Activated CD4-positive, alpha-beta T cell treated with anti-CD3 and anti-CD28 coated beads, Interleukin-2, amount 10 ng/mL, durations not matched to agents 7 days and 5 days (primary cell): ENCODE measurements at regions of chr19 and their contacts with region 1.

Region 1: GRCh38 chr19:47243776-47244547 is 12.4 kb upstream of the CCDC9 start:
- DNase-seq: peak; percentile 89
- H3K4me3 Mint-ChIP-seq: peak overlapping the region; percentile 71
- H3K27ac Mint-ChIP-seq: peak overlapping the region; percentile 92
- H3K4me1 Mint-ChIP-seq: peaks cover 27% of the 10 kb centered on the region
- H3K27me3 Mint-ChIP-seq: peaks cover 3% of the 10 kb centered on the region

Region 2: DNA sequence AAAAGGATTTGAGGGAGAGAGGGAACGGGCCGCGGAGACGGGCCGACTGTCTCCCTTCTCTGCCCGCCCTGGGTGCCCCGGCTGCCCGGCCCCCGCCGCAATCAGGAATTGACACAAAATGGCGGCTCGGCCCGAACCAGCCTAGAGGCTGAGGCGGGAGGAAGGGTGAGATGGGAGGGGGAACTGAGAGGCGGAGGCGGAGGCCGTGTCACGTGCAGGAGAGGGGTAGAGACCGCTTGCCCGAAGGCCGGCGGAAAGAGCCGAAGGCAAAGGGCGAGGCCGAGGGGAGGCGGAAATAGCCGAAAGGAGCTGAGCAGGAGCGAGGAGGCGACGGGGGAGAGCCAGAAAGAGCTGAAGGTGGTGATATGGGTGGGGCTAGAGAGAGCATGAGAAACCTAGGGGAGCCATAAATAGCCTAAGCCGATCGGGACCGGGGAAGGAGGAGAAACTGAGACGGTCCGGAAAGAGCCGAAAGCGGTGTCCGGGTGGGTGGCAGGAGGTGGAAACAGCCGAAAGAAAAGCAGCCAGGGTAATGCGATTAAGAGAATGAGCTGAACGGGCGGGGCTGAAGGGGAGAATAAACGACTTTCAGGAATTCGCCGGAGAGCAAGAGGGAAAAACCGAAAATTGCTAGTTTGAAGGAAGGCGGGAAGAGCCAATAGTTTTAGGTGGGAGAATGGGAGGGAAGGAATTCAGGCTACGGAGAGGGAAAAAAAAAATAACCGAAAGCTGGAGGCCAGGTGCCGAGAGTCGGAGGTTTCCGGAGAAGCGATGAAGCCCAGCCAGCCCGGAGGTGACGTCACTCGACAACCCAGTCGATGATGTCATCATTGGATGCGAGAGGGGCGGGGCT is 130.7 kb before region 1 on chr19 and contains the start of gene ZC3H4:
- CTCF ChIA-PET with region 1: interaction called, 17 read pairs
- POLR2A ChIA-PET with region 1: interaction called, 4 read pairs
- DNase-seq: peak; percentile 100
- H3K4me3 Mint-ChIP-seq: peak within 1 kb of the TSS; percentile 93
- H3K27ac Mint-ChIP-seq: peak within 1 kb of the TSS; percentile 100
- H3K4me1 Mint-ChIP-seq: peaks cover 29% of the 10 kb centered on the region
- H3K27me3 Mint-ChIP-seq: no peaks in the 10 kb centered on the region
- total RNA-seq, gene ZC3H4: 99.5 to 115 TPM

Region 3: GRCh38 chr19:47143322-47144073 is 100.5 kb before region 1 on chr19:
- CTCF ChIA-PET with region 1: interaction called, 31 read pairs
- POLR2A ChIA-PET with region 1: interaction called, 4 read pairs
- DNase-seq: no peak
- H3K4me3 Mint-ChIP-seq: no peak overlapping the region
- H3K27ac Mint-ChIP-seq: peak overlapping the region; percentile 32
- H3K4me1 Mint-ChIP-seq: peaks cover 53% of the 10 kb centered on the region
- H3K27me3 Mint-ChIP-seq: no peaks in the 10 kb centered on the region

Region 4: DNA sequence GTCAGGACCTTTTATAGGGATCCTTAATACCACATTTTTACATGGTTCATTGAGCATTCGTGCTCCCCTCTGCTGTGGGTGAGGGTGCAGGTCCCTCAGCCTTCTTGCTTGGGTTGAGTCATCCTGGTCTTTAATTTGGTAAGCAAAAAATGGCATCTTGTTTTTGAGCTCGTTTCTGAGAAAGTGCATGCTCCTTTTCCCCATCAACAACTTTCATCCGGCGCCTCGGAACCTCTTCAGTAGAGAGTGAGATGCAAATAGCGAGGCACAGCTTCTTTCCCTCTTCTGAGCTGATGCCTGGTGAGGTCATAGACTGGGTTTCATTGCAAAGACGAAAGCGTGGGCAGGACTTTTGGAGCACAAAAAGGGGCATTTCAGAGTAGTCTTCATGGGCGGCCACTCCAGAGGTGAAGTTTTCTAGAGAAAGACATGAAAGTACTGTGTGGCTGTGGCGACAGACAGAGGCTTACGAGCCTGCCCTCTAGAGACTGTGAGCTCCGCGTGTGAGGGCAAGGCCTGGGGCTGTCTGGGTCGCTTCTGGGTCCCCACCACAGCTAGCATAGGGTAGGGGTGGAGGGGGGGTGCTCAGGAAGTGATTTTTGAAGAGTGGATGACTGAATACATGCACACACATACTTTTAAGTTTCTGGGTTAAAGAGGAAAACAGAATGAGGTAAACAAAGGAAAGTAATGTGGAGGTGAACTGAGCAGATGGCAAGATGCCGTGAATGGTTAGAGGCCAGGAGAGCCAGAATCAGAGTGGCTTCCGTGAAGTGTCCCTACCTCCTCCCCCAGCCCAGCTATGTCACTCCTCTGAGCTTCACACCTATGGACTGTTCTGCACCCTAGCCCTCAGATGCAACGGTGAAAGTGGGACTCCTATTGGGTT is 57.3 kb before region 1 on chr19:
- CTCF ChIA-PET with region 1: interaction called, 20 read pairs
- POLR2A ChIA-PET with region 1: interaction called, 3 read pairs
- DNase-seq: peak; percentile 78
- H3K4me3 Mint-ChIP-seq: peak overlapping the region; percentile 44
- H3K27ac Mint-ChIP-seq: peak overlapping the region; percentile 93
- H3K4me1 Mint-ChIP-seq: peaks cover 87% of the 10 kb centered on the region
- H3K27me3 Mint-ChIP-seq: no peaks in the 10 kb centered on the region

Region 5: GRCh38 chr19:47225746-47226425 is 18.1 kb before region 1 on chr19:
- CTCF ChIA-PET with region 1: interaction called, 78 read pairs
- POLR2A ChIA-PET with region 1: interaction called, 5 read pairs
- DNase-seq: peak; percentile 84
- H3K4me3 Mint-ChIP-seq: peak overlapping the region; percentile 76
- H3K27ac Mint-ChIP-seq: peak overlapping the region; percentile 82
- H3K4me1 Mint-ChIP-seq: peaks cover 17% of the 10 kb centered on the region
- H3K27me3 Mint-ChIP-seq: no peaks in the 10 kb centered on the region

Region 6: DNA sequence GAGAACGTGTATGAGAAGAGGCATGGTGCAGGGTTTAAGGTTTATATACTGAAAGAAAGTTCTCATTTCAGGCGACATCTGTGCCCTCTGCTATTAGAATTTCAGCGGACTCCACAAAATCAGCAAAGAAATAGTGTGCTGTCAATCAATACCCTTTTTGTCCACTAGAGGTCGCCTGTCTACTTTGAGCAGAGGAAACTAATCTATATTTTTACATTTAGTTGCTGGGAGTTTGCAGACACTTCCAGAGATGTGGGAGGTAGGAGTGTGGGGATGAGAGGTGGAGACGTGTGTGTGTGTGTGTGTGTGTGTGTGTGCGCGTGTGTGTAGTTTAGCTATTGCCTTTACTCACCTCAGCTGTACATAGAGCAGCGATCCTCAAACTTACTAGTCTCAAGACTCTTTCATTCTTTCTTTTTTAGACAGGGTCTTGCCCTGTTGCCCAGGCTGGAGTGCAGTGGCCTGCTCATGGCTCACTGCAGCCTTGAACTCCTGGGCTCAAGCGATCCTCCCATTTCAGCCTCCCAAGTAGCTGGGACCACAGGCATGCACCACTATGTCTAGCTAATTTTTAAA is 40.5 kb after region 1 on chr19:
- CTCF ChIA-PET with region 1: no interaction called
- POLR2A ChIA-PET with region 1: no interaction called
- DNase-seq: peak; percentile 77
- H3K4me3 Mint-ChIP-seq: no peak overlapping the region
- H3K27ac Mint-ChIP-seq: no peak overlapping the region
- H3K4me1 Mint-ChIP-seq: peaks cover 8% of the 10 kb centered on the region
- H3K27me3 Mint-ChIP-seq: no peaks in the 10 kb centered on the region

Region 7: GRCh38 chr19:47330466-47330869 is 86.5 kb after region 1 on chr19:
- CTCF ChIA-PET with region 1: no interaction called
- POLR2A ChIA-PET with region 1: no interaction called
- DNase-seq: no peak
- H3K4me3 Mint-ChIP-seq: no peak overlapping the region
- H3K27ac Mint-ChIP-seq: no peak overlapping the region
- H3K4me1 Mint-ChIP-seq: peaks cover 8% of the 10 kb centered on the region
- H3K27me3 Mint-ChIP-seq: no peaks in the 10 kb centered on the region